ENCODE measurements at regions of chr6 and their contacts with region 1.

Region 1: GRCh38 chr6:42661540-42662153 is 60.8 kb downstream of the PRPH2 start:
- DNase-seq: peak; percentile 75 to 87 (median 85)
- H3K4me3 ChIP-seq: no peak overlapping the region
- H3K27ac ChIP-seq: no peak overlapping the region
- H3K4me1 ChIP-seq: no peaks in the 10 kb centered on the region
- H3K27me3 ChIP-seq: no peaks in the 10 kb centered on the region
- CTCF ChIP-seq: peak; percentile 82 to 93 (median 92)
- EP300 ChIP-seq: no peak
- POLR2A ChIP-seq: no peak

Region 2: GRCh38 chr6:42692137-42692911 is 30.7 kb after region 1 on chr6:
- intact Hi-C with region 1: no loop called
- DNase-seq: no peak
- H3K4me3 ChIP-seq: no peak overlapping the region
- H3K27ac ChIP-seq: no peak overlapping the region
- H3K4me1 ChIP-seq: peaks cover 1% of the 10 kb centered on the region
- H3K27me3 ChIP-seq: no peaks in the 10 kb centered on the region
- CTCF ChIP-seq: no peak
- EP300 ChIP-seq: no peak
- POLR2A ChIP-seq: no peak

Region 3: DNA sequence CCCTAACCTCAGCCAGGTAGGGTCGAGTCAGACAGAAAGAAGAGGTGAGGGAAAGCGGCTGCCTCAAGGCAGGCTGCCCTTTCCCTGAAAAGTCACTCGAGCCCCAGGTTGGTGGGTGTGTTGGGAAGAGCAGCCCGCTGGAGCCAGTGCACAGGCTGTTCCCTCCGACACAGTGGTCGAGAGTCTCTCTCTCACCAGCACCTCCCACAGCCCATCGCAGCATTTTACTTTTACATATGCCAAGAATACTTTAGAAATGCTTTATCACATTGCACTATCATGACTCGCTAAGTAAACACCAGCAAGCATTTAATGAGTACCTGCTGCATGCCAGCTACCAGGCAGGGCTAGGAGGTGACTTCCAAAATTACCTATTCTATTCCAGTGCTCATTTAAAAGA is 59.1 kb after region 1 on chr6:
- intact Hi-C with region 1: loop called in 3 of 4 experiments (anchors 5 kb)
- DNase-seq: no peak
- H3K4me3 ChIP-seq: no peak overlapping the region
- H3K27ac ChIP-seq: no peak overlapping the region
- H3K4me1 ChIP-seq: no peaks in the 10 kb centered on the region
- H3K27me3 ChIP-seq: no peaks in the 10 kb centered on the region
- CTCF ChIP-seq: no peak
- EP300 ChIP-seq: no peak
- POLR2A ChIP-seq: no peak

Region 4: DNA sequence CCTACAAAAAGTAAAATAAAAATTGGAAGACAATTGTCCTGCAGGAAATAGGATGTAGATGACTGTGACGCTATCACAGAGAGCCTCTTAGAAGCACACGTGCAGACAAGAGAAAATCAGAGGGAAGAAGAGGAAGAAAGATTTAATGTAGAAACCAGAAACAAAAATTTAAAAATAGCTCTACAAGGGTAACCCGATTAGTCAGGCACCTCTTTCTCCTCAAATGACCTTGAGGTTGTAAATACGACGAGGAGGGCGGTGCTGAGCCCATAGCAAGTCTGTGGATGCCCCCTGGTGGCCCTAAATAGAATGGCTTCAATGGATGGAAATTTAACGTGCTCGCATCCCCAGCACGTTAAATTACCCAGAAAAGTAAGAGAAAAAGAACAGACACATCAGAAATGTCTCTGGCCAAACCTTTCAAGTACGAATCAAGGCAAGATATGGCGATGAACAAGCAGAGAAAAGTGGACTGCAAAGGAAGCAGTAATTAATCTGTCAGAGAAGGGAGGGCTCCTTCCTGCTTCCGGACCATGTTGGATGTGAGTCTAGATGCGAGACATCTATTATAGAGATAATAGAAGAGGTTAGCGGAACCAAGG is 64.9 kb after region 1 on chr6:
- intact Hi-C with region 1: loop called in 3 of 4 experiments (anchors 5 kb)
- DNase-seq: peak; percentile 65 to 87 (median 81)
- H3K4me3 ChIP-seq: peak overlapping the region; percentile 43
- H3K27ac ChIP-seq: peak overlapping the region; percentile 26 to 85
- H3K4me1 ChIP-seq: peaks cover 5% of the 10 kb centered on the region
- H3K27me3 ChIP-seq: no peaks in the 10 kb centered on the region
- CTCF ChIP-seq: peak; percentile 90 to 94 (median 93)
- EP300 ChIP-seq: no peak
- POLR2A ChIP-seq: no peak

Region 5: GRCh38 chr6:42879372-42880239 is 218.0 kb after region 1 on chr6 and contains the start of gene RPL7L1:
- intact Hi-C with region 1: loop called (anchors 2 to 5 kb)
- DNase-seq: peak; percentile 77 to 85 (median 81)
- H3K4me3 ChIP-seq: peak within 1 kb of the TSS; percentile 72
- H3K27ac ChIP-seq: peak within 1 kb of the TSS; percentile 81 to 91
- H3K4me1 ChIP-seq: peaks cover 3% of the 10 kb centered on the region
- H3K27me3 ChIP-seq: no peaks in the 10 kb centered on the region
- CTCF ChIP-seq: peak in 1 of 3 donors; percentile 47
- EP300 ChIP-seq: no peak
- POLR2A ChIP-seq: peak; percentile 60
- total RNA-seq, gene RPL7L1: 60.1 to 77.9 (median 68.1) TPM

Region 6: DNA sequence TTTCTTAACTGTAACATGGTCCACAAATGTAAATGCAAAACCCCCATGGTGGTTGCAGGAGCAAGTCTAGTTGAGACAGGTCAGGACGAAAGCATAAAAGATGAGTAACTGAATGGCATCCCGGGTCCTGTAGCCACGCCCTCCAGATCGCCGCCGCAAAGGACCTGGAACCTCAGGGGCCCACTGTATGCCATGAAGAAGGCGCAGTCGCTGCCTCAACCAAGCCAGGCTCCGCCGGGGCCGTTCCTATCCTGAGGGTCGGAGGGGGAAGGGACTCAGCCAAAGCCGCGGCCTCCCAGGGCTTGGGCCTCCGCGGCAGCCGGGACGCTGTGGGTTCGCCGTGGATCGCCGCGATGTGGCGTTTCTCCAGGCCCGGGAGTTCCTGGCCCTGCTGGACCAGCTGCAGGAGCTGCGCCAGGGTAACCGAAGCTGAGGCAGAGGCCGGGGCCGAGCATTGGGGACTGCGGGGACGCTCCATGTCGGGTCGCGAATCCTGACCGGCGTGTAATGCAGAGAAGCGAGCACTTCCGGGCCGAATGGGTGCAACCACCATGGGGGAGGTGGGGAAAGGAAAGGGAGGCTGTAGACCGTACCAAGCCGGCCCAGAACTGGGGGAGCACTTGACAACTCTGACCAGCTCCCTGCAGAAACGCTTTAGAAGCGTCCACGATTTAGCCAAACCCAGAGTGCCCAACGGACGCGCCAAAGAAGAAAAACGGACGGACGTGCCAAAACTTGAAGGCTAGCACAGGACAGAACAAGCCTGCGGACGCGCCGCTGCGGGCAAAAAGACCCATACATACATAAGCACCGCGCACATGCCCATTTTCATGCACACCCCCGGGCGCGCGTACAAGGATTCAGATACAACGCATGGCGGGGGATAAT is 228.9 kb after region 1 on chr6:
- intact Hi-C with region 1: loop called in 1 of 4 experiments (anchors 5 kb)
- DNase-seq: peak; percentile 88 to 92 (median 92)
- H3K4me3 ChIP-seq: peak overlapping the region; percentile 79
- H3K27ac ChIP-seq: peak overlapping the region; percentile 59 to 79
- H3K4me1 ChIP-seq: no peaks in the 10 kb centered on the region
- H3K27me3 ChIP-seq: no peaks in the 10 kb centered on the region
- CTCF ChIP-seq: no peak
- EP300 ChIP-seq: no peak
- POLR2A ChIP-seq: no peak

Measured in ovary (tissue), 10 donors.